MCF 10A (cell line): ENCODE measurements at regions of chr9 and their contacts with region 1.

Region 1: DNA sequence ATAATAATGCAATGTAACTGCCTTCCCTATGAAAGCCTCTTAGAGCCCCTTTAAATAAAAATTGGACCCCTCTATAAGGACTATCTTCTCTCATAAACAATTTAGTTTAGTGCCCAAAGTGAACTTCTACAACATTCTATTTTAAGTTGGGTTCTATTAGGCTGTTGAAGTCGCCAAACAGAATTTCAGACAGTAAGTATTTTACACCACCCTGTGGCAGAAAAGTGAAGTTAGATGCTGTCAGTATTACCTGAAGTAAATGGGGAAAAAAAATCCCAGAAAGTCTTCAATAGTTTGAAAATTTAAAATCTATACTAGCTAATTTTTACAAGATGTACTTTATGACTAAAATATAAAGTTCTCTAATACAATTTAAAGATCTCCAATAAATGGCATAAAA is 29.5 kb downstream of the CAAP1 start:
- DNase-seq: peak; percentile 15
- H3K4me3 Mint-ChIP-seq: no peak overlapping the region
- H3K27ac Mint-ChIP-seq: no peak overlapping the region
- H3K4me1 Mint-ChIP-seq: no peaks in the 10 kb centered on the region
- H3K27me3 Mint-ChIP-seq: no peaks in the 10 kb centered on the region
- CTCF ChIP-seq: peak; percentile 36

Region 2: GRCh38 chr9:25964239-25964638 is 898.8 kb before region 1 on chr9:
- CTCF ChIA-PET with region 1: no interaction called
- POLR2A ChIA-PET with region 1: no interaction called
- intact Hi-C with region 1: loop called (anchors 10 kb)
- DNase-seq: peak; percentile 84
- H3K4me3 Mint-ChIP-seq: no peak overlapping the region
- H3K27ac Mint-ChIP-seq: no peak overlapping the region
- H3K4me1 Mint-ChIP-seq: no peaks in the 10 kb centered on the region
- H3K27me3 Mint-ChIP-seq: no peaks in the 10 kb centered on the region
- CTCF ChIP-seq: peak; percentile 52